Prostate gland (tissue), 2 donors: ENCODE measurements at regions of chr22 and their contacts with region 1.

Region 1: GRCh38 chr22:17501679-17502285 is 61.5 kb upstream of the SLC25A18 start:
- DNase-seq: peak; percentile 38
- H3K4me3 ChIP-seq: no peak overlapping the region
- H3K27ac ChIP-seq: no peak overlapping the region
- H3K4me1 ChIP-seq: no peaks in the 10 kb centered on the region
- H3K27me3 ChIP-seq: no peaks in the 10 kb centered on the region
- CTCF ChIP-seq: peak in 3 of 4 experiments; percentile 60 to 78 (median 67)
- POLR2A ChIP-seq: no peak

Region 2: DNA sequence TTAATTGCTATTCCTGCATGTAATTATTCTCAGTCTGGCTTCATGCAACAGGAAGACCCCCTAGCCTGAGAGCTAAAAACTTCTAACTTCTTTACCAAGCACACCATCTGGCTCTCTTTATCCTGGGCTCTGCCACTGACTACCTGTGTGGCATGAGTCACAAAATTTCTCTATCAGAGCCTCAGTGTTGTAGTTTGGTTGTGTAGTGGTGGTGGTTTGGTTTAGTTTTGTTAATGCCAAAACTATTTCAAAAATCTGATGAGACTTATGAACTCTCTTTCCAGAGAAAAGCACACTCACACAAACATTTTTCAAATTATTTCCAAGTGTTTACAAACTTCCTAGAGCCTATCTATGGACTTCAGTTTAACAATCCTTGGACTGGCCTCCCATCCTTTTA is 424.5 kb before region 1 on chr22:
- intact Hi-C with region 1: loop called (anchors 10 kb)
- DNase-seq: no peak
- H3K4me3 ChIP-seq: no peak overlapping the region
- H3K27ac ChIP-seq: no peak overlapping the region
- H3K4me1 ChIP-seq: no peaks in the 10 kb centered on the region
- H3K27me3 ChIP-seq: no peaks in the 10 kb centered on the region
- CTCF ChIP-seq: no peak
- POLR2A ChIP-seq: no peak

Region 3: GRCh38 chr22:17171313-17172171 is 330.2 kb before region 1 on chr22:
- intact Hi-C with region 1: loop called (anchors 5 kb)
- DNase-seq: peak; percentile 86
- H3K4me3 ChIP-seq: peak overlapping the region; percentile 66 to 86
- H3K27ac ChIP-seq: peak overlapping the region; percentile 89 to 95
- H3K4me1 ChIP-seq: no peaks in the 10 kb centered on the region
- H3K27me3 ChIP-seq: no peaks in the 10 kb centered on the region
- CTCF ChIP-seq: peak; percentile 80 to 94 (median 90)
- POLR2A ChIP-seq: no peak

Region 4: DNA sequence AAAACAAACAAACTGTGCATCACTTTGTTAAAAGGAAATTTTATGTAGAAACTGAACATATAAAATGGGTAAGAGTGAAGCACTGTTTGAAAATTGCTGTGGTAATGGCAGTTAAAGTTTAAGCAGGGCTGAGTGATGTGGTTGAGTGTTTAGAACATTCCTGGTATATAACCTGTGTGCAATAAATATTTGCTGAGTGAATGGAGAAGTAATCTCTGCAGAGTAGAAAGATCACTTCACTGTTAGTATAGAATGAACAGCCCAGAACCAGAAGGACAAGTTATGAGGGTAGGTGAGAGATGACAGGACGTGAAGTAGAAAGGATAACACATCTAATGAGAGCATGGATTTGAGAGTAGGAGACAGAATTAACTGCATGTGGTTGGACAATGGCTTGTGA is 105.2 kb before region 1 on chr22:
- intact Hi-C with region 1: no loop called
- DNase-seq: no peak
- H3K4me3 ChIP-seq: no peak overlapping the region
- H3K27ac ChIP-seq: no peak overlapping the region
- H3K4me1 ChIP-seq: no peaks in the 10 kb centered on the region
- H3K27me3 ChIP-seq: no peaks in the 10 kb centered on the region
- CTCF ChIP-seq: no peak
- POLR2A ChIP-seq: no peak